PC-3 (cell line): ENCODE measurements at regions of chr19 and their contacts with region 1.

Region 1: DNA sequence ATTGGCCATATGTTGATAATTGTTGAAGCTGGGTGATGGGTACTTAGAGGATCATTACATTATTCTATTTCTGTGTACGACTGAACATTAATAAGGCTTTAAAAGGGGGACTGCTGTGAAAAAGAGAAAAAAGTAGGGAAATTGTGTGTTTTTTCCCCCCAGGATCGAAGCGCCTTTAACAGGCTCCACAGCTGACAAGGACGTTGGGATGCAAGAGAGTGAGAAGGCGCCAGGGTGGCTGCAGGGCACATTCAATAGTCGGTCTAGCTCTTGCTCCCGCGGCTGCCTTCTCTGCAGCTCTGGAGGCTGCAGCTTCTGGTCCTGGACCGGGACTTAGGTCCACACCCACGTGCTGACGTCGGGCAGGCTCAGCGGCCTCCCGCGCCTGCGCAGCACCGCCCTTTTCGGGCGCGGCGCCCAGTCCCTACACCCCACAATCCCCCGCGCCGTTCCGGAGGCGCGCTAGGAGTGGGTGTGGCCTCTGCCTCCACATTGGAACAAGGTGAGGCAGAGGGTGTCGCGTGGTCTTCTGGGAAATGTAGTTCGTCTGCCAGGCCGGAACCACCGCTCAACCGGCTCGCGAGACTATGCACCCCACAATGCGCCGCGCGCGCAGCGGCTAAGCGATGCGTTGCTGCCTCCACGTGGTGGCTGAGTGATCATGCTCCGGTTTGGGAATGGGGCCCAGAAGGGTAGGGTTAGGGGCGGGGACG is 4.9 kb upstream of the LRFN3 start:
- DNase-seq: peak; percentile 98
- ATAC-seq: peak; percentile 96
- H3K4me3 ChIP-seq: peak overlapping the region; percentile 64
- H3K27ac ChIP-seq: no peak overlapping the region
- H3K4me1 ChIP-seq: peaks cover 9% of the 10 kb centered on the region
- H3K27me3 ChIP-seq: no peaks in the 10 kb centered on the region
- CTCF ChIP-seq: peak; percentile 81

Region 2: GRCh38 chr19:35748106-35749020 is 183.0 kb before region 1 on chr19 and contains the start of gene LIN37:
- CTCF ChIA-PET with region 1: no interaction called
- POLR2A ChIA-PET with region 1: no interaction called
- intact Hi-C with region 1: loop called (anchors 1 kb)
- DNase-seq: peak; percentile 97
- ATAC-seq: peak; percentile 83
- H3K4me3 ChIP-seq: peak within 1 kb of the TSS; percentile 100
- H3K27ac ChIP-seq: no peak within 1 kb of the TSS
- H3K4me1 ChIP-seq: peaks cover 23% of the 10 kb centered on the region
- H3K27me3 ChIP-seq: no peaks in the 10 kb centered on the region
- CTCF ChIP-seq: no peak
- total RNA-seq, gene LIN37: 4.6 and 8.2 TPM in 2 replicates

Region 3: GRCh38 chr19:35845215-35846037 is 85.9 kb before region 1 on chr19:
- CTCF ChIA-PET with region 1: no interaction called
- POLR2A ChIA-PET with region 1: no interaction called
- intact Hi-C with region 1: no loop called
- DNase-seq: peak; percentile 11
- ATAC-seq: peak; percentile 60
- H3K4me3 ChIP-seq: peak overlapping the region; percentile 52
- H3K27ac ChIP-seq: no peak overlapping the region
- H3K4me1 ChIP-seq: no peaks in the 10 kb centered on the region
- H3K27me3 ChIP-seq: no peaks in the 10 kb centered on the region
- CTCF ChIP-seq: no peak

Region 4: DNA sequence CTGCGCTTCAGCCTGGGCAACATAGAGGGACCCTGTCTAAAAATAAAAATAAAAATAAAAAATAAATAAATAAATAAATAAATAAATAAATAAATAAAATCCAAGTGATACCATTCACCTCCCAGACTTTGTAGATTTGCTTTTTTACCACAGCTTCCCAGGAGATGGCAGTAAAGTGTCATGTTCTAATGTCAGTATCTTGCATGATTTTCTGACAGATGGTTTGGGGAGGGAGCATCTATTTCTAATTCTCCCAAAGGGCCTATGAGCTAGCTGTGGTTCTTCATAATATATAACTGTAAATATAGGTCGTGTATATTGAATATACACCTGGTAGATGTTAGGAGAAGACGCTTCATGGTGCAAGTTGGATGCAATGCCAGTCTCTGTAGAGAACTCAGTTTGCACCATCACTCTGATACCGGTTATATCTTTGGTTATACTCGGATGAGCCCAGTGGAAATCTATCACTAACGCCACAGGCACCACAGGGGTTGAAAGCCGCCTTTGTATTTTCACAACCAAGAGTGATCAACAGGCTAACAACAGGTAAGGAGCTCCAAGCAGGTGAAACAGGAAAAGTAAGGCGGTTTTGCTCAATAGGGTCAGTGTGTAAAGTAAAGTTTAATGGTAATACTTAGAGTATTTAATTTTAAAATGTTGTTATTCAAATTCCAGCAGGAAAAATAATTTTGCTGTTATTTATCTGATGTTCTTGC is 49.0 kb before region 1 on chr19:
- CTCF ChIA-PET with region 1: interaction called, 7 read pairs
- POLR2A ChIA-PET with region 1: interaction called, 4 read pairs
- intact Hi-C with region 1: loop called (anchors 1 kb)
- DNase-seq: peak; percentile 71
- ATAC-seq: peak; percentile 49
- H3K4me3 ChIP-seq: no peak overlapping the region
- H3K27ac ChIP-seq: no peak overlapping the region
- H3K4me1 ChIP-seq: no peaks in the 10 kb centered on the region; the same call in 1 of the 2 replicates
- H3K27me3 ChIP-seq: no peaks in the 10 kb centered on the region
- CTCF ChIP-seq: peak; percentile 46; the same call in 1 of the 2 replicates

Region 5: GRCh38 chr19:35899547-35900214 is 31.6 kb before region 1 on chr19:
- CTCF ChIA-PET with region 1: interaction called, 3 read pairs
- POLR2A ChIA-PET with region 1: no interaction called
- intact Hi-C with region 1: loop called (anchors 2 kb)
- DNase-seq: peak; percentile 69
- ATAC-seq: peak; percentile 75
- H3K4me3 ChIP-seq: peak overlapping the region; percentile 95
- H3K27ac ChIP-seq: peak overlapping the region; percentile 59
- H3K4me1 ChIP-seq: peaks cover 10% of the 10 kb centered on the region; the same call in 1 of the 2 replicates
- H3K27me3 ChIP-seq: no peaks in the 10 kb centered on the region
- CTCF ChIP-seq: no peak

Region 6: GRCh38 chr19:36054119-36054732 is 122.9 kb after region 1 on chr19 and contains the start of gene THAP8:
- CTCF ChIA-PET with region 1: no interaction called
- POLR2A ChIA-PET with region 1: no interaction called
- intact Hi-C with region 1: loop called (anchors 10 kb)
- DNase-seq: peak; percentile 95
- ATAC-seq: peak; percentile 83
- H3K4me3 ChIP-seq: peak within 1 kb of the TSS; percentile 90
- H3K27ac ChIP-seq: peak within 1 kb of the TSS; percentile 88
- H3K4me1 ChIP-seq: peaks cover 9% of the 10 kb centered on the region
- H3K27me3 ChIP-seq: no peaks in the 10 kb centered on the region
- CTCF ChIP-seq: peak; percentile 39; the same call in 1 of the 2 replicates
- total RNA-seq, gene THAP8: 0.95 and 2.1 TPM in 2 replicates

Region 7: DNA sequence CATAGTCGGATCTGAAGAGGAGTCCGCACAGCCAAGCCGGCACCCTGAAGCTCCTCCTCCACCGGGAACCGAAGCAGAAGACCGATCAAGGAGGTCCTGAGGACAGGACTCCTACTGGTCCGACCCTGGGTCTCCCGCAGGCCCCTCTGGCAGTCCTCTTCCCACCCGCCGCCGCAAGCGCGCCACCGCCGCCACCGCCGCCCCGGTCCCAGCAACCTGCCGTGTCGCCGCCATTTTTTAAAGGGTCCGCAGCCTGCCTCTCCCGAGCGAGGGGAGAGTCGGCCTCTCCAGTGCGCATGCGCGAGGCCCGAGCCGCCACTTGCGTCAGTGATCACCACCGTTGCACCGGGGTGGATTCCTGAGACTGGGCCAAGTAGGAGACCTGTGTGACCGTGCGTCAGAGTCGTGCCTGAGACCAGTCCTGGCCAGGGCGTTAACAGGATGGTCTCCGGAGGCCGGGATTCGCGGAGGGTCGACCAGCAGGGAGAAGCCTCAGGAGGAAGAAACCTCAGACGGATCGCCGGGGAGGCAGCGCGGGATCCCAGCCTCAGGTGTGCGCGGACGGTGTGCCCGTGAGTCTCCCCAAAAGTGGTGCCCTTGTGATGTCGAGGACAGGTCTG is 335.1 kb after region 1 on chr19:
- CTCF ChIA-PET with region 1: no interaction called
- POLR2A ChIA-PET with region 1: no interaction called
- intact Hi-C with region 1: no loop called
- DNase-seq: no peak
- ATAC-seq: no peak
- H3K4me3 ChIP-seq: no peak overlapping the region
- H3K27ac ChIP-seq: no peak overlapping the region
- H3K4me1 ChIP-seq: no peaks in the 10 kb centered on the region
- H3K27me3 ChIP-seq: no peaks in the 10 kb centered on the region
- CTCF ChIP-seq: no peak